Colonic mucosa (tissue), 4 donors: ENCODE measurements at regions of chr16 and their contacts with region 1.

Region 1: GRCh38 chr16:81261049-81261648 is 22.7 kb downstream of the BCO1 start:
- DNase-seq: no peak
- H3K4me3 ChIP-seq: no peak overlapping the region
- H3K27ac ChIP-seq: no peak overlapping the region
- H3K4me1 ChIP-seq: no peaks in the 10 kb centered on the region
- H3K27me3 ChIP-seq: no peaks in the 10 kb centered on the region
- CTCF ChIP-seq: peak; percentile 56

Region 2: GRCh38 chr16:81349996-81350618 is 89.0 kb after region 1 on chr16:
- intact Hi-C with region 1: loop called (anchors 5 kb)
- DNase-seq: no peak
- H3K4me3 ChIP-seq: no peak overlapping the region
- H3K27ac ChIP-seq: no peak overlapping the region
- H3K4me1 ChIP-seq: no peaks in the 10 kb centered on the region
- H3K27me3 ChIP-seq: no peaks in the 10 kb centered on the region
- CTCF ChIP-seq: no peak

Region 3: DNA sequence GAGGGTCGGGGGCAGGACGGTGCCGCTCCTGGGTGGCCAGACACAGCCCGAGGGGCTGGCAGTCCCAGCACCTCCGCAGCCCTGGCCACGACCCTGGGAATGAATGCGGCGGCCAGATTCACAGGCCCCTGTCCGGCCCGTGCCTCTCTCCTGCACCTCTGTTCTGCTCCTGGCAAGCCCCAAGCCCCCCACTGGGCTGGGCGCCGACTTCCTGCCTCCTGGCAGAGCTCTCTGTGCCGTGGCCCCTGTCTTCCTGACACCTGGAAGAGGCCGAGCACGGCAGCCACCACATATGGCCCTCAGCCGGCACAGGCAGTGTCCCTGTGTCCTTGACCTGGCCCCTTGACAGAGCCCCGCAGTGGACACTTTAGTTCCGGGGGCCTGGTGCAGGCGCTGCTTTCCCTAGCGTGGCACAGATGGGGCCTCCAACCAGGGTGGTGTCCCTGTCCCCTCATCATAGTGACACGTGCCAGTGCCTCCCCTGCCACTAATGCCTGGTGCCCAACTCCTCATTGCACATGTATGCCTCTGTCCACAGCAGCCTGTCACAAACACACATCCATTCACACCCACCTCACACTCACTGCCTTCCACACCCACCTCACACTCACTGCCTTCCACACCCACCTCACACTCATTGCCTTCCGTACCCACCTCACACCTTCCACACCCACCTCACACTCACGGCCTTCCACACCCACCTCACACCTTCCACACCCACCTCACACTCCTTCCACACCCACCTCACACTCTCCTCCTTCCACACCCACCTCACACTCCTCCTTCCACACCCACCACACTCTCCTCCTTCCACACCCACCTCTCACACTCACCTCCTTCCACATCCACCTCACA is 407.3 kb after region 1 on chr16:
- intact Hi-C with region 1: no loop called
- DNase-seq: no peak
- H3K4me3 ChIP-seq: no peak overlapping the region
- H3K27ac ChIP-seq: no peak overlapping the region
- H3K4me1 ChIP-seq: no peaks in the 10 kb centered on the region
- H3K27me3 ChIP-seq: no peaks in the 10 kb centered on the region
- CTCF ChIP-seq: no peak